ENCODE measurements at regions of chr3 and their contacts with region 1.

Region 1: GRCh38 chr3:29683018-29683993 is 402.4 kb downstream of the RBMS3 start:
- DNase-seq: no peak
- H3K4me3 Mint-ChIP-seq: no peak overlapping the region
- H3K27ac Mint-ChIP-seq: no peak overlapping the region
- H3K4me1 Mint-ChIP-seq: peaks cover 8% of the 10 kb centered on the region
- H3K27me3 Mint-ChIP-seq: peaks cover 7% of the 10 kb centered on the region

Region 2: DNA sequence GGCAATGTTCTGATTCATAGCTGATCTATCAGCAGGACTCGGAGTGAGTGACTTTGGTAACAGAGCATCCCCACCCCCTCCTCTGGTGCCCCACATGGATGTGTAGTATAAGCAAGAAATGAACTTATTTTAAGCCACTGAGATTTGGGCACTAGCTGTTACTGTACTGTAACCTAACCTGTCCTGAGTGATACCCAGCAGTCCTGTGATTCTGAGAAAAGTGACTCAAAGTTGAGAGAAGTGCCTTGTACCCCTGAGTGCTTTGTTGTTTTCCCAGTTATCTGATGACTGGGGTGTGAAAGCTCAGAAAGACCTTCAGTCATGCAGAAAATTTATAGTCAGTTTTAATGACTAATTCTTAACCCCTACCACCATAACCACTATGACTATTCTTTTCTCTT is 842.3 kb before region 1 on chr3:
- CTCF ChIA-PET with region 1: no interaction called
- intact Hi-C with region 1: loop called (anchors 2 kb)
- DNase-seq: peak; percentile 22
- H3K4me3 Mint-ChIP-seq: no peak overlapping the region
- H3K27ac Mint-ChIP-seq: no peak overlapping the region
- H3K4me1 Mint-ChIP-seq: peaks cover 5% of the 10 kb centered on the region
- H3K27me3 Mint-ChIP-seq: peaks cover 2% of the 10 kb centered on the region

Region 3: GRCh38 chr3:28916713-28917499 is 766.4 kb before region 1 on chr3:
- CTCF ChIA-PET with region 1: no interaction called
- intact Hi-C with region 1: loop called (anchors 10 kb)
- DNase-seq: peak; percentile 16
- H3K4me3 Mint-ChIP-seq: no peak overlapping the region
- H3K27ac Mint-ChIP-seq: no peak overlapping the region
- H3K4me1 Mint-ChIP-seq: peaks cover 6% of the 10 kb centered on the region
- H3K27me3 Mint-ChIP-seq: peaks cover 5% of the 10 kb centered on the region

Region 4: GRCh38 chr3:29186982-29187725 is 496.2 kb before region 1 on chr3:
- CTCF ChIA-PET with region 1: no interaction called
- intact Hi-C with region 1: loop called (anchors 10 kb)
- DNase-seq: no peak
- H3K4me3 Mint-ChIP-seq: no peak overlapping the region
- H3K27ac Mint-ChIP-seq: peak overlapping the region; percentile 38
- H3K4me1 Mint-ChIP-seq: peaks cover 12% of the 10 kb centered on the region
- H3K27me3 Mint-ChIP-seq: no peaks in the 10 kb centered on the region

Region 5: GRCh38 chr3:29936054-29936453 is 252.7 kb after region 1 on chr3:
- CTCF ChIA-PET with region 1: no interaction called
- intact Hi-C with region 1: loop called (anchors 5 kb)
- DNase-seq: peak; percentile 5
- H3K4me3 Mint-ChIP-seq: no peak overlapping the region
- H3K27ac Mint-ChIP-seq: no peak overlapping the region
- H3K4me1 Mint-ChIP-seq: peaks cover 5% of the 10 kb centered on the region
- H3K27me3 Mint-ChIP-seq: peaks cover 20% of the 10 kb centered on the region

Region 6: GRCh38 chr3:30737743-30738499 is 1054.6 kb after region 1 on chr3:
- CTCF ChIA-PET with region 1: no interaction called
- intact Hi-C with region 1: loop called (anchors 5 kb)
- DNase-seq: no peak
- H3K4me3 Mint-ChIP-seq: no peak overlapping the region
- H3K27ac Mint-ChIP-seq: peak overlapping the region; percentile 74
- H3K4me1 Mint-ChIP-seq: peaks cover 42% of the 10 kb centered on the region
- H3K27me3 Mint-ChIP-seq: no peaks in the 10 kb centered on the region

Region 7: DNA sequence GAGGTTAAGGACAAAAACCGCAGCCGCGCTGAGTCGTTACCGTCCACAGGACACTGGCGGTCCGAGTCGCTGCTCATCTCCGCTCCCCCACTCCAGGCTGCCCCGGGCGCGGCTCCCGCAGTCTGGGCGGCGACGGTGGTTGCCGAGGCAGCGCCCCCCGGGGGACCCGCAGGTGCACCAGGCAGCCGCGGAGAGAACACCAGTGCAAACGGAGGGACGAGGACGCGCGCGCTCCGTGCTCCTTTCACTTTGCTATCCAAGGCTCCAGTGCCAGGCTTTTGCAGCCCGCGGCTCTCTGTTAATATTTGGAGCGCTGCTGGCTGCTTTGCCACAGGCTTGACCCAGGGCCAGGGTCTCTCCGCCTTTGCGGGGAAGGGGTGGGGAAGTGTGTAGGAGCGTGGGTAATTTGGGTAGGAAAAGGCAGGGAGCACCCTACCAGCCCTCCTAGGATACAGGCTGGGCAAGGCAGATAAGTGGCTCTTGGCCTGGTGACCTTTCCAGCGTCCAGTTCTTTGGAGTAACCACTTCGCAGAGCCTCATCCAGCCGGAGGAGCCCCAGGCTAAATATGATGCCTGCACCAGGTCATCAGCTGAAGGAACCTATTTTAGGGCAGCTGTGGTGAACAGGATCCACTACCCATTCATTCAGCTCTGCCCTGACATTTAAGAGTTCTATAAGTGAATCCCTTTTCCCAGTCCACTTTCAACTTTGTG is 1211.4 kb after region 1 on chr3 and contains the start of gene GADL1:
- CTCF ChIA-PET with region 1: no interaction called
- intact Hi-C with region 1: no loop called
- DNase-seq: peak; percentile 38
- H3K4me3 Mint-ChIP-seq: peak within 1 kb of the TSS; percentile 57
- H3K27ac Mint-ChIP-seq: no peak within 1 kb of the TSS
- H3K4me1 Mint-ChIP-seq: peaks cover 16% of the 10 kb centered on the region
- H3K27me3 Mint-ChIP-seq: peaks cover 30% of the 10 kb centered on the region
- total RNA-seq, gene GADL1: not detected